ENCODE measurements at regions of chr1 and their contacts with region 1.

Region 1: DNA sequence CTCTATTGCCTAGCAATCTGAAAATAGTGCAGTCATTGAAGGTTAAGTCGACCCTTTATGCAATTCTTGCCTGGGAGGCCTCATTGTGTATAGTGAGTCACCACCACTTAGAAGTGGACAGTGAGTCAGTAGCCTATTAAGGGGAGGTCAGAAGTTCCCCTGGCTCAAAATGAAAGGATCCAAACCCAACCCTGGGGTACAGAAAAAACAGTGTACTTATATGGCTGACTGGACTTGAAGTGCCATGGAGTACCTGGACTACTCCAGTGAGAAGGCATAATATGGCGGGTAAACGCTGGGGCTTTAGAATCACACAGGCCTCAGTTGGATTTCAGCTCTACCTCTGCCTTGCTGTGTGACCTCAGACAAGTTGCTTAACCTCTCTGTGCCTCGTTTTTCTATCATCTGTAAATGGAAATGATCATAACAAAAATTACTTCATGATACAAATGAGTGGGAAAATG is 2.2 kb upstream of the BCL9 start:
- DNase-seq: peak; percentile 48
- ATAC-seq: no peak
- H3K4me3 Mint-ChIP-seq: no peak overlapping the region
- H3K27ac Mint-ChIP-seq: peak overlapping the region; percentile 23
- H3K4me1 Mint-ChIP-seq: peaks cover 32% of the 10 kb centered on the region
- H3K27me3 Mint-ChIP-seq: no peaks in the 10 kb centered on the region

Region 2: GRCh38 chr1:145804235-145805045 is 1734.7 kb before region 1 on chr1:
- CTCF ChIA-PET with region 1: no interaction called
- POLR2A ChIA-PET with region 1: no interaction called
- intact Hi-C with region 1: no loop called
- DNase-seq: no peak
- ATAC-seq: no peak
- H3K4me3 Mint-ChIP-seq: no peak overlapping the region
- H3K27ac Mint-ChIP-seq: no peak overlapping the region
- H3K4me1 Mint-ChIP-seq: peaks cover 37% of the 10 kb centered on the region
- H3K27me3 Mint-ChIP-seq: no peaks in the 10 kb centered on the region

Region 3: GRCh38 chr1:147472966-147473734 is 66.0 kb before region 1 on chr1:
- CTCF ChIA-PET with region 1: no interaction called
- POLR2A ChIA-PET with region 1: no interaction called
- intact Hi-C with region 1: no loop called
- DNase-seq: no peak
- ATAC-seq: no peak
- H3K4me3 Mint-ChIP-seq: no peak overlapping the region
- H3K27ac Mint-ChIP-seq: no peak overlapping the region
- H3K4me1 Mint-ChIP-seq: no peaks in the 10 kb centered on the region
- H3K27me3 Mint-ChIP-seq: peaks cover 22% of the 10 kb centered on the region

Region 4: GRCh38 chr1:147515046-147515869 is 23.9 kb before region 1 on chr1:
- CTCF ChIA-PET with region 1: interaction called, 7 read pairs
- POLR2A ChIA-PET with region 1: interaction called, 3 read pairs
- intact Hi-C with region 1: loop called in 1 of 2 experiments (anchors 2 kb)
- DNase-seq: peak; percentile 26
- ATAC-seq: peak; percentile 94
- H3K4me3 Mint-ChIP-seq: no peak overlapping the region
- H3K27ac Mint-ChIP-seq: peak overlapping the region; percentile 61
- H3K4me1 Mint-ChIP-seq: peaks cover 18% of the 10 kb centered on the region
- H3K27me3 Mint-ChIP-seq: no peaks in the 10 kb centered on the region

Region 5: DNA sequence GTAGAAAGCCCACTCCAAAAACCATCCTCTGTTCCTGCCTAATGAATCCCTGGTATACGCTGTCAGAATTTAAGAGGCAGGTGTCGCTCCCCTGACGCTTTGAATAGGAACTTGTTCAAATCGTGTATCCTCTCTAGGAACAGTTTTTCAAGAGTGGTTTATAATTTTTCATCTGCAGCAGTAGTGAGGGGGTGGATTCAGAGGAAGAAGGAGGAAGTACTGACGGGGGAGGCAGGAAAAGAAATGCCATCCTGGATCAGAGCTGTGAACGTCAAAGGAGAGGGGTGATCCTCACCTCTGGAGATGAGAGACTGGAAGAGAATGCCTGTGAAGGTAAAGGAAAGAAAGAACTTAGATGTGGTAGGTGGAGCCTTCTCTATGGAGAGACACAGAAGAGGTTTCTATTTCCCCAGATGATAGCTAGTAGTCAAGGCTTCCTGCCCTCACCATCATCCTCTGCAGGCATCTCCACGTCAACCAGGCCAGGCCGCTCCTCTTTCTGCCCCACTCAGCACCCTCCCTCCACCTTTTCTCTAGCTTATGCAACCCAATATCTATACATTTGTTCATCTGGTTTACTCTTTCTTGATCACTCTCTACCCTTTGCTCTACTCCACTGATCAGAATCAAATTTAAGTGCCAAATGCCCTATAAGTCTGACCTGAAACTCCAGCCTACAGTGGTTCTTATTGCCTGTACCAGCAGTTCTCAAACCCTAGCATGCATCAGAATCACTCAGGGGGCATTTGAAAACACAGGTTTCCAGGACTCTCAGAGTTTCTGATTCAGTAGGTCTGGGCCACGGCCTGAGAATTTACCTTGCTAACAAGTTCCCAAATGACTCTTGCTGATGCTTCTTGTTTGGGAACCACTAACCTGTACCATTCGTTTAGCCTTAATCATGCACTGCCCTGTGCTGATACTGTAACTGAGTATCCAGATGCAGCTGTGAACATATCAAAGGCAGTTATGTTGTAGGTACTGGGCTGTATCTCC is 10.9 kb before region 1 on chr1:
- CTCF ChIA-PET with region 1: interaction called, 12 read pairs
- POLR2A ChIA-PET with region 1: interaction called, 3 read pairs
- intact Hi-C with region 1: no loop called
- DNase-seq: peak; percentile 44
- ATAC-seq: peak; percentile 87
- H3K4me3 Mint-ChIP-seq: no peak overlapping the region
- H3K27ac Mint-ChIP-seq: no peak overlapping the region
- H3K4me1 Mint-ChIP-seq: peaks cover 3% of the 10 kb centered on the region
- H3K27me3 Mint-ChIP-seq: no peaks in the 10 kb centered on the region

Region 6: GRCh38 chr1:147579532-147579931 is 40.4 kb after region 1 on chr1:
- CTCF ChIA-PET with region 1: interaction called, 4 read pairs
- POLR2A ChIA-PET with region 1: no interaction called
- intact Hi-C with region 1: loop called (anchors 1 to 2 kb)
- DNase-seq: no peak
- ATAC-seq: peak; percentile 79
- H3K4me3 Mint-ChIP-seq: peak overlapping the region; percentile 30
- H3K27ac Mint-ChIP-seq: peak overlapping the region; percentile 79
- H3K4me1 Mint-ChIP-seq: peaks cover 48% of the 10 kb centered on the region
- H3K27me3 Mint-ChIP-seq: peaks cover 10% of the 10 kb centered on the region